Right ventricle myocardium inferior (tissue), 1 donor: ENCODE measurements at regions of chr1 and their contacts with region 1.

Region 1: GRCh38 chr1:204363335-204364124 is 3.8 kb upstream of the PLEKHA6 start:
- DNase-seq: peak; percentile 86
- ATAC-seq: peak; percentile 73

Region 2: GRCh38 chr1:204059970-204060369 is 303.6 kb before region 1 on chr1:
- intact Hi-C with region 1: no loop called
- DNase-seq: no peak
- ATAC-seq: no peak

Region 3: GRCh38 chr1:204162231-204163074 is 201.1 kb before region 1 on chr1:
- intact Hi-C with region 1: loop called (anchors 1 kb)
- DNase-seq: peak; percentile 89
- ATAC-seq: peak; percentile 84

Region 4: DNA sequence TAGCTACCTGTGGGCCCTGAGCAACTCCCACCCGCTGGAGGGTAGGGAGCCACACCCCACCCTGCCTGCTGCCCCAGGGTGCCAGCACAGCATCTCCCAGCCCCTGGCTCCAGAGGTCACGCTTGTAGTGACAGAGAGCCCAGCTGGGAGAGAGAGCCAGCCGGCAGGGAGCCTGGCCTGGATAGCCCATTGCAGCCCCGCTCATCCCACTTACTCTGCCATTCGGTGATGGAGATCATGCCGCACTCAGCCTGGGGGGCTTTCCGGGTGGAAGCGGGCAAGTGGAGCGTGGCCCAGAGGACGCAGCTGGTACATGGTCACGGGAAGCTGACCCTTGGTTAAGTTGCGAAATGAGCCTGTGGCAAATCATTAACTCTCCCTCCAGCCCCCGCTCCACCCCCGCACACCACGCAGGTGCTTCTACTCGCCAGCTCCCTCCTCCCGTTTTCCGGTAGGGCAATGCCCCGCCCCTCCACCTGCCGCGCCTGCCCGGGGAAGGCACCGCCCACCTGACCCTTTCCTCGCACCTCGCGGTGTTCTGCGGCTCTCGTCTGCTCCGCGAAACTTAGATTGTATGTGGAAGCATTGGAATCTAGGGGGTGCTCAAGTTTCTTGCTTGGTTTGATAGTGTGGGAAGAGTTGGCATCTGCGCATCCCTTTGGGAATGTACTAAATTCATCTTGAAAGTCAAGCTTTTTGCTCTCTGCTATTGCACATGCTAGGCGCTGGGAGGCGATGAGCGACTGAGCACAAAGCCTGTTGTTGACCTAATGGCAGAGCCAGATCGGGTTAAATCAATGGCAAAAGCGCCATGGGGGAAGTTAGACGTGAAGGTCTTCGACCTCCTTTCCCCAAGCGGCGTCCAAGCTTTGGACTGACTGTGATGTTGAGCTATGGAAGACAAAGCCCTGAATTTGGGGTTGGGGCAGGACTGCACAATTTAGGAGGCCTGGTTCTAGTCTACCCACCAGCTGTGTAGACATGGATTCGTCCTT is 149.6 kb before region 1 on chr1 and contains the start of gene GOLT1A:
- intact Hi-C with region 1: loop called (anchors 1 kb)
- DNase-seq: no peak
- ATAC-seq: peak; percentile 78
- total RNA-seq, gene GOLT1A: not detected

Region 5: DNA sequence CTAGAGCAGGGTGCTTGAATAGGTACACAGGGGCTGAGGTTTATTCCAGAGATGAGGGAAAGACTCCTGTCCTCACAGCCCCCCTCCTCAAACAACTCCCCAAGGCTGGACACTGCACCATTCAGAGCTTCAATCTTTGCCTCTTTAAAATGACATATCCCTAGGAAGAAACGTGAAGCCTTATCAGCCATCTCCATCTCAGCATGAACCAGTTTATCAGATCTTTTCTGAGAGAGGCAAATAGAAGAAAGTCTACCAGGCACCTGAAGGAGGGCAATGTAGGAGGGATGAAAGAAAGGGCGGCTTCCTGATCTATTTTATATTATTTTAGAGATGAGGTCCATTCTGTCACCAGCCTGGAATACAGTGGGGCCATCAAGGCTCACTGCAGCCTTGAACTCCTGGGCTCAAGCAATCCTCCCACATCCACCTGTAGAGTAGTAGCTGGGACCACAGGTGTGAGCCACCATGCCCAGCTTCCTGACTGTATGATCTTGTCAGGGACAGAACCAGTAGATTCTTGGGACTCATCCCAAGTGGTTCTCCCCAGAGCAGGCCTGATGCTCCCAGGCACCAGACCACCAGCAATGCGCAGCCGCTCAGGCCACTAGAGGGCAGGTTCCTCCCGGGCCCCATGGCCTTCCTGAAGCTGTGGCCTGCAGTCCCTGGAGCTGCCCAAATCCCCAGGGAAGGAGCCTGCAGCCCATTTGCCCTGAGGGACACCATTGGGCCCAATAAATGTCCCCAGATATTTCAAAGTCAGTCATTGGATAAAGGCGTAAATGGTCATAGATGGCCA is 105.4 kb before region 1 on chr1:
- intact Hi-C with region 1: loop called (anchors 1 kb)
- DNase-seq: peak; percentile 84
- ATAC-seq: peak; percentile 40

Region 6: GRCh38 chr1:204341380-204341779 is 22.1 kb before region 1 on chr1:
- intact Hi-C with region 1: no loop called
- DNase-seq: no peak
- ATAC-seq: no peak